HepG2 (cell line): ENCODE measurements at regions of chr3 and their contacts with region 1.

Region 1: GRCh38 chr3:72571638-72572208 is 276.5 kb downstream of the SHQ1 start:
- DNase-seq: peak; percentile 82
- ATAC-seq: peak; percentile 56
- H3K4me3 ChIP-seq: peak overlapping the region; percentile 49 to 73 (median 54)
- H3K27ac ChIP-seq: peak overlapping the region; percentile 89
- H3K4me1 ChIP-seq: peaks cover 97% of the 10 kb centered on the region
- H3K27me3 ChIP-seq: no peaks in the 10 kb centered on the region
- CTCF ChIP-seq: no peak
- EP300 ChIP-seq: peak in 1 of 2 experiments; percentile 79; a peak in 1 of 4 replicates
- POLR2A ChIP-seq: no peak
- RAD21 ChIP-seq: no peak

Region 2: DNA sequence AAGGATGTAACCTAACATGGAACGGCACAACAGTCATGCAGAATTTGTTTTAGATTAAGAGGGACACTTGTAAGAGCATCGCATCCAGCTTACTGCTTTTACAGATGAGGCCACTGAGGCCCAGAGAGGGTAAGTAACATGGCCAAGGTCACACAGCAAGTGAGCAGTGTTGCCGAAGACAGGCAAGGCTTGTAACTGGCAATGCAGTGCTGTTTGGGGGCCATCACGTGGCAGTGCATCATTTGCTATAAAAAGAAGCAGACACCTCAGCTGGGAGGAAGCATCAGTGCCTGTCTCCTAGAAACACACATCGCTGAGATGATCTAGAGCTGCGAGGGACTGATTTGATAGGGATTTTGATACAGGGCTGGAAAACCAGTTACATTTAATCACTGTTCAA is 678.6 kb before region 1 on chr3:
- CTCF ChIA-PET with region 1: no interaction called
- POLR2A ChIA-PET with region 1: no interaction called
- in situ Hi-C with region 1: no loop called
- intact Hi-C with region 1: no loop called
- DNase-seq: no peak
- ATAC-seq: no peak
- H3K4me3 ChIP-seq: no peak overlapping the region
- H3K27ac ChIP-seq: no peak overlapping the region
- H3K4me1 ChIP-seq: no peaks in the 10 kb centered on the region
- H3K27me3 ChIP-seq: no peaks in the 10 kb centered on the region; a peak in 1 of 5 replicates
- CTCF ChIP-seq: no peak
- EP300 ChIP-seq: no peak
- POLR2A ChIP-seq: no peak
- RAD21 ChIP-seq: no peak

Region 3: DNA sequence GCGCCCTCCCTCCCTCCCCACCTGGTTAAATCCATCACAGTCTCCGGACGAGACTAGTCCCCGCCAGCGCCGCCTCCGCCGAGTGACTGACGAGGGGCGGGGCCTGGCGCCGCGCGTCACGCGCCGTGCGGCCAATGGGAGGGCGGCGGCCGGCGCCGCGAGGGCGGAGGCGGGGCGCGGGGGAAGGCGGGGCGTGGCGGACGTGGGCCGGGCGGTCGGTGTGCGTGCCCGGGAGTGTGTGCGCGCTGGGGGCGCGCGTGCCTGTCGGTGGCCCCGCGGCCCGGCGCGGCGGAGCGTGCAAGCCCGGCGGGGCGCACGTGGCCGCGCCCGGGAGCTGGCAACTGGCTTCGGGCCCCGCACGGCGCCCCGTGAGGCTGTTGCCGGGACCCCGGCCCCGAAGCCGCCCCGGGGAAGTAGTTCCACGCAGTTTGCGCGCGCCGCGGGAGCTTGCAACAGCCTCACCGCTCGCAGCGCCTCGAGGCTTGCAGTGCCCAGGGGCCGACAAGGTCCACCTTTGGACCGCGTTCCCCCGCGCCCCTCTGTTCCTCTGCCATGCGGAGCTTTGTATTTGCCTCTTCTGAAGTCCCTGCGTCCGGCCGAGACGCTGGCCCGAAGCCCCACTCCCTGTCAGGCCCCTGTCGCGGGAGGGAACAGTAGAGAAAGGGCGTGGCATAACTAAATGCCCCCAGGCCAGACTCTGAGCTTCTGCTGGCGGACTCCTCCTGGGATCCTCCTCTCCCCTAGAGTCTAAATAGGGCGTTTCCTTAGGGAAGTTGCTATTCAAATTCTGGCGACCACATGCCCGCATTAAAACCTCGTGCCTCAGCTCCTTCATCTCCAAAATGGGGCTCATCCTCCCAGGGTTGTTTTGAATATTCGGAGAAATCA is 124.4 kb before region 1 on chr3:
- CTCF ChIA-PET with region 1: no interaction called
- POLR2A ChIA-PET with region 1: no interaction called
- in situ Hi-C with region 1: no loop called
- intact Hi-C with region 1: loop called (anchors 5 kb)
- DNase-seq: peak; percentile 66
- ATAC-seq: peak; percentile 71
- H3K4me3 ChIP-seq: peak overlapping the region; percentile 92 to 94 (median 93); a peak in 4 of 6 replicates
- H3K27ac ChIP-seq: peak overlapping the region; percentile 84
- H3K4me1 ChIP-seq: peaks cover 64% of the 10 kb centered on the region
- H3K27me3 ChIP-seq: peaks cover 0 to 2% of the 10 kb centered on the region in 2 experiments; a peak in 1 of 5 replicates
- CTCF ChIP-seq: no peak
- EP300 ChIP-seq: no peak
- POLR2A ChIP-seq: no peak; a peak in 1 of 4 replicates
- RAD21 ChIP-seq: peak; percentile 75

Region 4: DNA sequence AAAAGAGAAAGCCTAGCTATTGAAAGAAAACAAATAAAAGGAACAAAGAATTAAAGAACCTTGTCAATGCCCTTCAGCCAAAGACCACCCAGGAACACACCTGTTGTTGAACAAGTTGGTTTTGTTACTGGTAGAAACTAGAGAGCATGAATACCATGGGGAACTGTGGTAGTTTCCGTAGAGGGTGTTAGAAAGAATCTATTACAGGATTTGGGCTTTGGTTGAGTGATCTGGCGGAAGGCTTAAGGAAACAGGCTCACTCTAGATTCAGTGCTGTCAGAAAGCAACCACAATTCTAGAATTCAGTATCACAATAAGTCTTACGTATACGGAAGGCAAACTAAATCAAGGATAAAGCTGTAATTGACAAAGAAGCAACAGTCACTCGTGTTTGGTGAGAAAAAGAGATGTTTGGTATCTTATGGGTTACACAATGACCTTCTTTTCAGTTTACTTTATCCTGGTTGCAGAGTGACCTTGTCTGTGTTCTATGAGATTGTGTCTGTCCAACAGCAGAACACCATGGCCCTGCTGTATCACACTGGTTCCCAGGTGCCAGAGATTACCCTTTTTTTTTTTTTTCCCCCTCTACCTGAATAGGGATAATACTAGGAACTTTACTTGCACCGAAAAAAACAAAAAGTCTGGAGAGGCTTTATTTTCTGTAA is 10.6 kb after region 1 on chr3:
- CTCF ChIA-PET with region 1: no interaction called
- POLR2A ChIA-PET with region 1: interaction called, 15 read pairs
- in situ Hi-C with region 1: no loop called
- intact Hi-C with region 1: no loop called
- DNase-seq: peak; percentile 79
- ATAC-seq: peak; percentile 71
- H3K4me3 ChIP-seq: peak overlapping the region in 1 of 3 experiments; percentile 29; a peak in 1 of 6 replicates
- H3K27ac ChIP-seq: peak overlapping the region; percentile 74
- H3K4me1 ChIP-seq: peaks cover 98% of the 10 kb centered on the region
- H3K27me3 ChIP-seq: no peaks in the 10 kb centered on the region
- CTCF ChIP-seq: no peak
- EP300 ChIP-seq: peak in 1 of 2 experiments; percentile 71; a peak in 2 of 4 replicates
- POLR2A ChIP-seq: no peak
- RAD21 ChIP-seq: no peak